CD4-positive, alpha-beta T cell (primary cell): ENCODE measurements at regions of chr20 and their contacts with region 1.

Region 1: GRCh38 chr20:44310664-44311639 is at the start of gene FITM2:
- DNase-seq: peak; percentile 96 to 99 (median 98)
- ATAC-seq: peak; percentile 94
- H3K4me3 ChIP-seq: peak within 1 kb of the TSS; percentile 99
- H3K4me3 Mint-ChIP-seq: peak within 1 kb of the TSS; percentile 95
- H3K27ac ChIP-seq: peak within 1 kb of the TSS; percentile 40 to 47
- H3K27ac Mint-ChIP-seq: peak within 1 kb of the TSS; percentile 76
- H3K4me1 ChIP-seq: peaks cover 28% of the 10 kb centered on the region
- H3K4me1 Mint-ChIP-seq: peaks cover 28% of the 10 kb centered on the region
- H3K27me3 ChIP-seq: no peaks in the 10 kb centered on the region
- H3K27me3 Mint-ChIP-seq: no peaks in the 10 kb centered on the region
- CTCF ChIP-seq: peak; percentile 87
- total RNA-seq, gene FITM2: 3.2 to 3.4 TPM

Region 2: GRCh38 chr20:43456809-43457639 is 853.9 kb before region 1 on chr20:
- CTCF ChIA-PET with region 1: no interaction called
- POLR2A ChIA-PET with region 1: no interaction called
- intact Hi-C with region 1: loop called in 1 of 2 experiments (anchors 10 kb)
- DNase-seq: peak; percentile 70 to 94 (median 80)
- ATAC-seq: peak; percentile 78
- H3K4me3 ChIP-seq: peak overlapping the region; percentile 86
- H3K4me3 Mint-ChIP-seq: peak overlapping the region; percentile 94
- H3K27ac ChIP-seq: peak overlapping the region; percentile 99 to 100
- H3K27ac Mint-ChIP-seq: peak overlapping the region; percentile 95
- H3K4me1 ChIP-seq: peaks cover 18% of the 10 kb centered on the region
- H3K4me1 Mint-ChIP-seq: peaks cover 37% of the 10 kb centered on the region
- H3K27me3 ChIP-seq: peaks cover 0 to 8% of the 10 kb centered on the region in 2 experiments
- H3K27me3 Mint-ChIP-seq: peaks cover 13% of the 10 kb centered on the region
- CTCF ChIP-seq: no peak

Region 3: DNA sequence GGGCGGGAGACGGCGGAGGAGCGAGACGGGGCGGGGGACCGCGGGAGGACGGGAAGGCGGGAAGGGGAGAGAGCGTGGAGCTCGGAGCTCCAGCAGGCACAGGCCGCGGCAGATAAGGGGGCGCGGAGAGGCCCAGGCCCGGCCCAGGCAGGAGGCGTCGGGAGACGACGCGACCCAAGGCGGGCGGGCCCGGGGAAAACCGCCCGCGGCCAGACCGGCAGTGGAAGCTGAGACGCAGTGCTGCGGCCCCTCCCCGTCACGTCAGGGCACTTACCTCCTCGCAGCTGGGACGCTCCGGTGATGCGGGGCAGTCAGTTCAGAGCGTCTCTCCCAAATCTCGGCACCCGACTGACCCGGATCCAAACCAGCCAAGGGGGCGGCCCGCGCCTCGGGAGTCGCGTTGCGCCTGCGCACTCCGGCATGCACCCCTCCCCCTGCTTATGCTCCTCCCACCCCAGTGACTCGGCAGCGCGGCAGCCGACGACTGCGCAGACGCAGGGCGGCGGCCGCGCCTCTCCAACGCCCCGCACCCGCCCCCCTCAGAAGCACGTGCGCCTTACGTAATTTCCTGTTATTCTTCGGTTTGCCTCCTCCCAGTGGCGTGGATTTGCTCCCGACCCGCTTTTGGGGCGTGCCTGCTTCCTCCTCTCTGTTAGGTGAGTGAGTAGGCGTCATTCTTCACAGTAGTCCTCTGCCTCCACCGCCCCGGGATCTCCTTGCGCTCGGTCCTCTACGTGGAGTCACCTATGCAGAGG is 100.4 kb before region 1 on chr20 and contains the start of gene OSER1:
- CTCF ChIA-PET with region 1: interaction called, 241 read pairs
- POLR2A ChIA-PET with region 1: interaction called, 155 read pairs
- intact Hi-C with region 1: no loop called
- DNase-seq: peak; percentile 96 to 100 (median 98)
- ATAC-seq: peak; percentile 83
- H3K4me3 ChIP-seq: peak within 1 kb of the TSS; percentile 78
- H3K4me3 Mint-ChIP-seq: peak within 1 kb of the TSS; percentile 92
- H3K27ac ChIP-seq: peak within 1 kb of the TSS; percentile 95 to 98
- H3K27ac Mint-ChIP-seq: peak within 1 kb of the TSS; percentile 99
- H3K4me1 ChIP-seq: peaks cover 29% of the 10 kb centered on the region
- H3K4me1 Mint-ChIP-seq: peaks cover 67% of the 10 kb centered on the region
- H3K27me3 ChIP-seq: no peaks in the 10 kb centered on the region
- H3K27me3 Mint-ChIP-seq: no peaks in the 10 kb centered on the region
- CTCF ChIP-seq: no peak
- total RNA-seq, gene OSER1: 172 TPM

Region 4: DNA sequence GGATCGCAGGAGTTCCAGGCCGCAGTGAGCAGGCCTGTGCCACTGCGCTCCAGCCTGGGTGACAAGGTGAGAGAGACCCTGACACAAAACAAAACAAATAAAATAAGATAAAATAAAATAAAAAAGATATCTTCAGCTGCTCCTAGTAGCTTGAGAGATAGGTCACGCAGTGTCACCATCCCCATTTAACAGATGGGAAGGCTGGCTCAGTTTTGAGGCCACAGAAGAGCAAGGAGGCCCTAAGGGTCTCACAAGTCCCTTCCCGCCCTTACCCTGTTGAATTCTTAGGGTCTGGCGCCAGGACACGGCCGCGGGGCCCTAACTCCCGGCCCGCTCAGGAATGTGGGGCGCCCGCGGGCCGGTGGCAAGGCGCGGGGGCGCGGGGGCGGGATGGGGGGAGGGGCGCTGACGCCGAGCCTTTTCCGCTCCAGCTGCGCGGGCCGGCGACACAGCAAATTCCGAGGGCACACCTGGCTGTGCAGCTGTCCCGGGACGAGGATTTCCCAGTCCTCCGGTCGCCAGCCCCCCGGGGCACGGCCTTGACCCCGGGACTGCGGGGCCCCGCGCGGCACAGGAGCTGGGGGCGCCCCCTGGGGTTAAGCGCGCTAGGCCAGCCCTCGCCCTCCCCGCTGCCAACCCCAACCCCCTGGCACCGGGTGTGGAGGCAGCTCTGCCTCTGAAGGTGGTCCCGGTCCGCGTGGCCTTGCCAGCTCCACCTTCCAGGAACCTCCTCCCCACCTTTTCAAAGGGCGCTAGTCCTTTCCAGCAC is 15.6 kb after region 1 on chr20:
- CTCF ChIA-PET with region 1: interaction called, 13 read pairs
- POLR2A ChIA-PET with region 1: interaction called, 5 read pairs
- intact Hi-C with region 1: no loop called
- DNase-seq: peak in 6 of 14 experiments; percentile 15 to 43 (median 24)
- ATAC-seq: peak; percentile 57
- H3K4me3 ChIP-seq: peak overlapping the region; percentile 28
- H3K4me3 Mint-ChIP-seq: no peak overlapping the region
- H3K27ac ChIP-seq: no peak overlapping the region
- H3K27ac Mint-ChIP-seq: no peak overlapping the region
- H3K4me1 ChIP-seq: peaks cover 5% of the 10 kb centered on the region
- H3K4me1 Mint-ChIP-seq: no peaks in the 10 kb centered on the region
- H3K27me3 ChIP-seq: no peaks in the 10 kb centered on the region
- H3K27me3 Mint-ChIP-seq: no peaks in the 10 kb centered on the region
- CTCF ChIP-seq: no peak

Region 5: GRCh38 chr20:44342248-44342647 is 31.3 kb after region 1 on chr20:
- CTCF ChIA-PET with region 1: no interaction called
- POLR2A ChIA-PET with region 1: no interaction called
- intact Hi-C with region 1: no loop called
- DNase-seq: no peak
- ATAC-seq: no peak
- H3K4me3 ChIP-seq: no peak overlapping the region
- H3K4me3 Mint-ChIP-seq: no peak overlapping the region
- H3K27ac ChIP-seq: no peak overlapping the region
- H3K27ac Mint-ChIP-seq: no peak overlapping the region
- H3K4me1 ChIP-seq: no peaks in the 10 kb centered on the region
- H3K4me1 Mint-ChIP-seq: no peaks in the 10 kb centered on the region
- H3K27me3 ChIP-seq: no peaks in the 10 kb centered on the region
- H3K27me3 Mint-ChIP-seq: peaks cover 4% of the 10 kb centered on the region
- CTCF ChIP-seq: no peak

Region 6: GRCh38 chr20:44460795-44461141 is 149.8 kb after region 1 on chr20:
- CTCF ChIA-PET with region 1: no interaction called
- POLR2A ChIA-PET with region 1: no interaction called
- intact Hi-C with region 1: loop called in 1 of 2 experiments (anchors 5 kb)
- DNase-seq: peak in 4 of 14 experiments; percentile 14 to 41 (median 31)
- ATAC-seq: no peak
- H3K4me3 ChIP-seq: no peak overlapping the region
- H3K4me3 Mint-ChIP-seq: no peak overlapping the region
- H3K27ac ChIP-seq: no peak overlapping the region
- H3K27ac Mint-ChIP-seq: no peak overlapping the region
- H3K4me1 ChIP-seq: no peaks in the 10 kb centered on the region
- H3K4me1 Mint-ChIP-seq: no peaks in the 10 kb centered on the region
- H3K27me3 ChIP-seq: no peaks in the 10 kb centered on the region
- H3K27me3 Mint-ChIP-seq: no peaks in the 10 kb centered on the region
- CTCF ChIP-seq: peak; percentile 43

Region 7: GRCh38 chr20:44609511-44610312 is 298.8 kb after region 1 on chr20:
- CTCF ChIA-PET with region 1: interaction called, 7 read pairs
- POLR2A ChIA-PET with region 1: no interaction called
- intact Hi-C with region 1: loop called (anchors 2 to 10 kb)
- DNase-seq: peak; percentile 68 to 90 (median 80)
- ATAC-seq: peak; percentile 81
- H3K4me3 ChIP-seq: no peak overlapping the region
- H3K4me3 Mint-ChIP-seq: peak overlapping the region; percentile 83
- H3K27ac ChIP-seq: peak overlapping the region; percentile 35 to 86
- H3K27ac Mint-ChIP-seq: peak overlapping the region; percentile 98
- H3K4me1 ChIP-seq: peaks cover 28% of the 10 kb centered on the region
- H3K4me1 Mint-ChIP-seq: peaks cover 40% of the 10 kb centered on the region
- H3K27me3 ChIP-seq: no peaks in the 10 kb centered on the region
- H3K27me3 Mint-ChIP-seq: no peaks in the 10 kb centered on the region
- CTCF ChIP-seq: peak; percentile 93

Region 8: GRCh38 chr20:44678242-44678641 is 367.3 kb after region 1 on chr20:
- CTCF ChIA-PET with region 1: no interaction called
- POLR2A ChIA-PET with region 1: no interaction called
- intact Hi-C with region 1: no loop called
- DNase-seq: no peak
- ATAC-seq: no peak
- H3K4me3 ChIP-seq: no peak overlapping the region
- H3K4me3 Mint-ChIP-seq: no peak overlapping the region
- H3K27ac ChIP-seq: no peak overlapping the region
- H3K27ac Mint-ChIP-seq: no peak overlapping the region
- H3K4me1 ChIP-seq: no peaks in the 10 kb centered on the region
- H3K4me1 Mint-ChIP-seq: no peaks in the 10 kb centered on the region
- H3K27me3 ChIP-seq: no peaks in the 10 kb centered on the region
- H3K27me3 Mint-ChIP-seq: no peaks in the 10 kb centered on the region
- CTCF ChIP-seq: no peak